ENCODE measurements at regions of chr11 and their contacts with region 1.

Region 1: GRCh38 chr11:86068951-86069407 is at the start of gene PICALM:
- DNase-seq: peak; percentile 97 to 98 (median 98)
- H3K4me3 ChIP-seq: peak within 1 kb of the TSS; percentile 84
- H3K27ac ChIP-seq: peak within 1 kb of the TSS; percentile 85 to 88
- H3K4me1 ChIP-seq: peaks cover 9% of the 10 kb centered on the region
- H3K27me3 ChIP-seq: no peaks in the 10 kb centered on the region
- CTCF ChIP-seq: peak in 1 of 3 donors; percentile 20
- EP300 ChIP-seq: peak; percentile 61
- POLR2A ChIP-seq: peak; percentile 83
- total RNA-seq, gene PICALM: 176 to 274 (median 206) TPM

Region 2: GRCh38 chr11:86101941-86102407 is 33.0 kb after region 1 on chr11:
- intact Hi-C with region 1: no loop called
- DNase-seq: no peak
- H3K4me3 ChIP-seq: no peak overlapping the region
- H3K27ac ChIP-seq: no peak overlapping the region
- H3K4me1 ChIP-seq: no peaks in the 10 kb centered on the region
- H3K27me3 ChIP-seq: no peaks in the 10 kb centered on the region
- CTCF ChIP-seq: no peak
- EP300 ChIP-seq: no peak
- POLR2A ChIP-seq: no peak

Region 3: DNA sequence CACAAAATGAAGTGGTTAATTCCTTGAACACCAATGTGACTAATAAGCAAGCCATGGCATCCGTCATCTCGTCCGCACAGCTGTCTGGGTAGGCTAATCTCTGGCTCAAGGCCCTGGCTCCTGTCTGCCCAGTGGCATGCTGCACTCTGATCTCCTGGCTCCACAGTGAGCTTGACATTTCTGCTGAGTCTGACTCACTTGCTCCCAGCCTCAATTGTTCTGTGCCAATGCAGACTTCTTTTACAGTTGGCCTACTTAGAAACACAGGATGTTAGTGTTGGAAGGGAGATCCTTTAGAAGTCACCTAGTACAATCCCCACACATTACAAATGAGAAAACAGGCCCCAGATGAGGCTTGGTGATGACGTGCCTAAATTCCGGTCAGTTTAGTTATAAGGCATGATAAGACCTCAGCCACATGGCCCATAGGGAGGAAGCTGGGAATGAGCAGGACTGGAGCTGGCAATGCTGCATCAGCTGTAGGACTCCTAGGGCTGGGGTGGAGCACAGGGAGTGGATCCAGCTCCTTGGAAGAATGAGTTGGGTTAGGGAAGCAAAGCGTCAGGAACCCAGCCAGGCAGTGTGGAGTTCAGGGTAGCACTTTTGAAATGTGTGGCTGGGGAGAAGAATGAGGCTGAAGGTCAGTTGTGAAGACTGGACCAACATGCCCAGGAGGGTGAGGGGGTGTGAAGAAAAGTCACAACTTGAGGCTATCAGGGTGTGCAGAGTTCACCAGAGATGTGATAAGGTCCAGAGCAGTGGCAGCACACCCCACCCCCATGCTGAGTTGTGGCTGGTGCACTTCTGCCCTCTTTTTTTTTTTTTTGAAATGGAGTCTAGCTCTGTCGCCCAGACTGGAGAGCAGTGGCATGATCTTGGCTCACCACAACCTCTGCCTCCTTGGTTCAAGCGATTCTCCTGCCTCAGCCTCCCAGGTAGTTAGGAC is 105.4 kb after region 1 on chr11:
- intact Hi-C with region 1: loop called in 1 of 4 experiments (anchors 10 kb)
- DNase-seq: peak; percentile 48 to 65 (median 54)
- H3K4me3 ChIP-seq: no peak overlapping the region
- H3K27ac ChIP-seq: peak overlapping the region in 1 of 2 donors; percentile 48
- H3K4me1 ChIP-seq: peaks cover 14% of the 10 kb centered on the region
- H3K27me3 ChIP-seq: no peaks in the 10 kb centered on the region
- CTCF ChIP-seq: no peak
- EP300 ChIP-seq: no peak
- POLR2A ChIP-seq: no peak

Measured in ovary (tissue), 10 donors.